Right cardiac atrium (tissue), 5 donors: ENCODE measurements at regions of chr9 and their contacts with region 1.

Region 1: GRCh38 chr9:14466429-14466818 is 152.5 kb upstream of the NFIB start:
- DNase-seq: no peak
- ATAC-seq: no peak
- H3K4me3 ChIP-seq: no peak overlapping the region
- H3K27ac ChIP-seq: no peak overlapping the region
- H3K4me1 ChIP-seq: no peaks in the 10 kb centered on the region
- H3K27me3 ChIP-seq: no peaks in the 10 kb centered on the region

Region 2: DNA sequence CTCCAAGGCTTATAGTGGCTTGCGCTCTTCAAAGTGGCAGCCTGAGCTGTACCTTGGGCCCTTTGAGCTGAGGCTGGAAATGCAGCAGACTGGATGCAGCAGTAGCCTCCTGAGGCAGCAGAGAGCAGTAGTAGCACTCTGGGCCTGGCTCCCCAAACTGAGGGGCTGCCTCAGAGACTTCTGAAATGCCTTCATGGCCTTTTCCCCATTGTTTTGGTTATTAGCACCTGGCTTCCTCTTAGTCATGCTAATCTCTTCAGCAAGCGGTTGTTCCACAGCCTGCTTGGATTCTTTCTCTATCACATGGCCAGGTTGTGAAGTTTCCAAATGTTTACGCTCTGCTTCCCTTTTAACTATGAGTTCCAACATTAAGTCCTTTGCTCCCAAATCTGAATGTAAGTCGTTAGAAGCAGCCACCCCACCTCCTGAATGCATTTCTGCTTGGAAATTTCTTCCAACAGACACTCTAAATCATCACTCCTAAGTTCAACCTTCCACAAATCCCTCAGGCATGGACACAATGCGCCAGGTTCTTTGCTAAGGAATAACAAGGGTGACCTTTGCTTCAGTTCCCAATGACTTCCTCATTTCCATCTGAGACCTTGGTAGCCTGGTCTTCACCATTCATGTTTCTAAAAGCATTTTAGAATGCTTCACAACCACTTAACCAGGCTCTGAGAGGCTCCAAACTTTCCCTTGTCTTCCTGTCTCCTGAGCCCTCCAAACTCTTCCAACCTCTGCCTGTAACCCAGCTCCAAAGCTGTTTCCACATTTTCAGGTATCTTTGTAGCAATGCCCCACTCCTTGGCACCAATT is 81.0 kb after region 1 on chr9:
- intact Hi-C with region 1: loop called in 1 of 4 experiments (anchors 10 kb)
- DNase-seq: no peak
- ATAC-seq: peak in 1 of 2 donors; percentile 33
- H3K4me3 ChIP-seq: no peak overlapping the region
- H3K27ac ChIP-seq: no peak overlapping the region
- H3K4me1 ChIP-seq: no peaks in the 10 kb centered on the region
- H3K27me3 ChIP-seq: no peaks in the 10 kb centered on the region

Region 3: GRCh38 chr9:14652729-14653377 is 186.4 kb after region 1 on chr9:
- intact Hi-C with region 1: loop called in 1 of 4 experiments (anchors 10 kb)
- DNase-seq: no peak
- ATAC-seq: no peak
- H3K4me3 ChIP-seq: no peak overlapping the region
- H3K27ac ChIP-seq: no peak overlapping the region
- H3K4me1 ChIP-seq: no peaks in the 10 kb centered on the region
- H3K27me3 ChIP-seq: no peaks in the 10 kb centered on the region

Region 4: DNA sequence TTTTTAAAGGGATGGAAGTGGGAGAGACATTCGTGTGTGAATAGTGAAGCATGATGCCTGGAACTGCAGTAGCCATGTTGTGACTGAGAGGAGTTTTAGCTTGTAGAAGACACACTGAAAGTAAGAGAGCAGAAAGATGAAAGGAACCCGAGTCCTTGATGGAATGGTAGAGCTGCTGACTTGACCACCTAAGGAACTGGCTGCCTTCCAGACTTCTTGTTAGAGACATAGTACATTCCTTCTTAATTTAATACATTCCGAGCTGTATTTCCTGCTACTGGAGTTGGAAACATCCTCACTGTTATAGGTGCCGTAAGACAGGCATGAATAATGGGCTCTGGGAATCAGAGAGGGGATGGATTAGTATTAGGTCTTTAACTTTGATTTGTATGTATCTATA is 248.7 kb after region 1 on chr9:
- intact Hi-C with region 1: no loop called
- DNase-seq: no peak
- ATAC-seq: no peak
- H3K4me3 ChIP-seq: no peak overlapping the region
- H3K27ac ChIP-seq: no peak overlapping the region
- H3K4me1 ChIP-seq: no peaks in the 10 kb centered on the region
- H3K27me3 ChIP-seq: no peaks in the 10 kb centered on the region